G401 (cell line): ENCODE measurements at regions of chr5 and their contacts with region 1.

Region 1: DNA sequence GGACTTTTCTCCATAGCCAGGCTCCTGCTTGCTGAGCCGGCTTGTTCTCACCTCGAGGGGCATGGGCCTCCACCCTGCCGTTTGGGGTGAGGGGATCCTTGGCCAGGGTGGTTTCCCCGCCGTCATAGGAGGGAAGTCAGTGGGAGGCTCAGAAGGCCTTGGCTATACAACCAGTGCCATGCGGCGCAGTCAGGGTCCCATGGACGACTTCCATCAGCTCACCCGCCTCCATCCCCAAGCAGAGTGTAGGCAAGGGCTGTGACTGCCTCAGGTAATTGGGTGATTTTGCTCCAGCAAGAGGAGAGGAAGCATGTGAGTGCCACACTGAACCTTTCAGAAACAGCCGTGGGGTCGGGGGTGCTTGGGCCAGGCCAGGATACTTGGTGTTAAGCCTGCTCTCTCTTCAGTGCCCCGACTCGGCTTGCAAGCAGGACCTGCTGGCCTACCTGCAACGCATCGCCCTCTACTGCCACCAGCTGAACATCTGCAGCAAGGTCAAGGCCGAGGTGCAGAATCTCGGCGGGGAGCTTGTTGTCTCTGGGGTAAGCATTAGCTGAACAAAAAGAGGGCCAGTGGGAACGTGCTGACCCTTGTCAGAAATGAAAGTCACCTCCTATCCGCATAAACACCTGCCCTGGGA is 57.2 kb upstream of the LRRTM2 start:
- DNase-seq: no peak

Region 2: GRCh38 chr5:138895918-138896317 is 36.4 kb before region 1 on chr5:
- in situ Hi-C with region 1: loop called (anchors 5 kb)
- DNase-seq: no peak